Right ventricle myocardium inferior (tissue), 1 donor: ENCODE measurements at regions of chr6 and their contacts with region 1.

Region 1: GRCh38 chr6:15479761-15480160 is 183.1 kb downstream of the DTNBP1 start:
- DNase-seq: no peak
- ATAC-seq: peak; percentile 36

Region 2: GRCh38 chr6:15399641-15400470 is 79.9 kb before region 1 on chr6:
- intact Hi-C with region 1: loop called (anchors 10 kb)
- DNase-seq: peak; percentile 79
- ATAC-seq: peak; percentile 89

Region 3: GRCh38 chr6:15623276-15624116 is 143.7 kb after region 1 on chr6:
- intact Hi-C with region 1: no loop called
- DNase-seq: no peak
- ATAC-seq: peak; percentile 49